WTC11 (cell line): ENCODE measurements at regions of chr1 and their contacts with region 1.

Region 1: DNA sequence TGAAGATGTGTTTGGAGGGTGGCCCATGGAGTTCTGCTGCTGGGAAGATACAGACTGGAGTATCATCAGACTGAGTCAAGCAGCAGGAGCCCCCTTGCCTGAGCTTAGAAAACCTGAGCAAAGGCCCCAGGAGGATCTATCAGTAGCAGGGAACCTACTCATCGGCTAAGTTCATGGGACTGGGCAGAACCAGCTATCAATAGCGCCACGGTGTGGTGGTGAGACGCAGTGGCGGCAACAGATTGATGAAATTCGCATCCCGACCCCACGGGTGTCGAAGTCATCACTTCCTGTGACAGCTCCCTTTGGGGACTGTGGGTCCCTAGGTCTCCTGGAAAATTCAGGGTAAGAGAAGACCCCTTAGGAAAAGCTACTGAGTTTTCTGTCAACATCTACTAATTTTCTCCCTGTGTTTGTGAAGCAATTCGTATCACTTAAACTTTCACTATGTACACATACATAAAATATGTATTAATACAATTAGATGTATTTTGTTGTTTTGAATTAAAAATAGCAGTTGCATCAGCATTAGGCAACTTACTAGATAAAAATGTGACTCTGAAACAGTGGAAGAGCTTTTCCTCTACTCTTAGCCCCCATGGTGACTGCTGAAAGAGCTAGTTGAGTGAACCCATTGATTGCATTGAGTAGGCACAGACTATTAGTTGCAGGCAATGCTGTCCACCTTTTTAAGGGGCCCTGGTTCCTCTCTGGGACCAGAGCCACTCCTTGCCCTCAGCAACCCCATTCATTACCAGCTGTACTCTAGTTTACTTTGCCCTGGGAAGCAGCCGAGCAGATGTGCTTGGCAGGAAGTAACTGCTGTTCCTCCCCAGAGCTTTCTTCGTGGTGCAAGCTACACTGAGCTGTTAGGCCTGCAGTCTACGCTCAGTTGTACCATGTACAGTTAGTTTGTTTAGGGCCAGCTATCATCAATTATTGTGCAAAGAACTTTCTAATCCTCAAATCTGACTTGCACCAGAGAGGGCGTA is 7.3 kb upstream of the CACNA1S start:
- DNase-seq: peak; percentile 77
- ATAC-seq: peak; percentile 74
- H3K4me3 Mint-ChIP-seq: no peak overlapping the region
- H3K27ac Mint-ChIP-seq: no peak overlapping the region
- H3K4me1 Mint-ChIP-seq: peaks cover 10% of the 10 kb centered on the region
- H3K27me3 Mint-ChIP-seq: peaks cover 53% of the 10 kb centered on the region
- CTCF ChIP-seq: peak; percentile 71

Region 2: GRCh38 chr1:200992382-200993048 is 127.0 kb before region 1 on chr1:
- CTCF ChIA-PET with region 1: interaction called, 14 read pairs
- POLR2A ChIA-PET with region 1: no interaction called
- DNase-seq: no peak
- ATAC-seq: no peak
- H3K4me3 Mint-ChIP-seq: no peak overlapping the region
- H3K27ac Mint-ChIP-seq: no peak overlapping the region
- H3K4me1 Mint-ChIP-seq: no peaks in the 10 kb centered on the region
- H3K27me3 Mint-ChIP-seq: no peaks in the 10 kb centered on the region; the same call in 1 of the 2 replicates
- CTCF ChIP-seq: no peak

Region 3: DNA sequence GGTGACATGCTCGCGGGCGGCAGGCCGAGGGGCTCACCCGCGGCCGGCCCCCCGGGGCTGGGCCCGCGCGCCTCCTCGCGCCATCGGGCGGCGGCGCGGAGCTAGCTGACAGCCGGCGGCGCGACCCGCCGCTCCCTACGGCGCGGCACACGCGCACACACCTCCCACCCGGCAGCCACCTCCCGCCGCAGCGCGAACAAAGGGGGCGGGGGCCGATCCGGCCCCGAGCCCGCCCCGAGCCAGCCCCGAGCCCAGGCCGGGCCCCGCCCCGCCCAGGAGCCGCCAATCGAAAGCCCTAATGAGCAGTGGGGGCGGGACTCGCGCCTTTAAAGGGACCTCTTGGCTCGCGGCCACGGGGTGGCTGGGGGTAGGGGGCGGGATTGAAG is 96.0 kb before region 1 on chr1 and contains the start of gene KIF21B:
- CTCF ChIA-PET with region 1: interaction called, 61 read pairs
- POLR2A ChIA-PET with region 1: no interaction called
- DNase-seq: peak; percentile 90
- ATAC-seq: peak; percentile 82
- H3K4me3 Mint-ChIP-seq: peak within 1 kb of the TSS; percentile 79
- H3K27ac Mint-ChIP-seq: no peak within 1 kb of the TSS
- H3K4me1 Mint-ChIP-seq: peaks cover 65% of the 10 kb centered on the region
- H3K27me3 Mint-ChIP-seq: peaks cover 7% of the 10 kb centered on the region
- CTCF ChIP-seq: no peak
- total RNA-seq, gene KIF21B: 17.8 to 19.4 TPM (median 18.0 TPM) in 3 replicates

Region 4: GRCh38 chr1:201069636-201070035 is 49.9 kb before region 1 on chr1:
- CTCF ChIA-PET with region 1: interaction called, 15 read pairs
- POLR2A ChIA-PET with region 1: no interaction called
- DNase-seq: no peak
- ATAC-seq: peak; percentile 64
- H3K4me3 Mint-ChIP-seq: no peak overlapping the region
- H3K27ac Mint-ChIP-seq: no peak overlapping the region
- H3K4me1 Mint-ChIP-seq: peaks cover 10% of the 10 kb centered on the region
- H3K27me3 Mint-ChIP-seq: no peaks in the 10 kb centered on the region
- CTCF ChIP-seq: no peak

Region 5: GRCh38 chr1:201096035-201096434 is 23.5 kb before region 1 on chr1:
- CTCF ChIA-PET with region 1: interaction called, 19 read pairs
- POLR2A ChIA-PET with region 1: no interaction called
- DNase-seq: no peak
- ATAC-seq: no peak
- H3K4me3 Mint-ChIP-seq: no peak overlapping the region
- H3K27ac Mint-ChIP-seq: no peak overlapping the region
- H3K4me1 Mint-ChIP-seq: no peaks in the 10 kb centered on the region
- H3K27me3 Mint-ChIP-seq: no peaks in the 10 kb centered on the region
- CTCF ChIP-seq: no peak

Region 6: DNA sequence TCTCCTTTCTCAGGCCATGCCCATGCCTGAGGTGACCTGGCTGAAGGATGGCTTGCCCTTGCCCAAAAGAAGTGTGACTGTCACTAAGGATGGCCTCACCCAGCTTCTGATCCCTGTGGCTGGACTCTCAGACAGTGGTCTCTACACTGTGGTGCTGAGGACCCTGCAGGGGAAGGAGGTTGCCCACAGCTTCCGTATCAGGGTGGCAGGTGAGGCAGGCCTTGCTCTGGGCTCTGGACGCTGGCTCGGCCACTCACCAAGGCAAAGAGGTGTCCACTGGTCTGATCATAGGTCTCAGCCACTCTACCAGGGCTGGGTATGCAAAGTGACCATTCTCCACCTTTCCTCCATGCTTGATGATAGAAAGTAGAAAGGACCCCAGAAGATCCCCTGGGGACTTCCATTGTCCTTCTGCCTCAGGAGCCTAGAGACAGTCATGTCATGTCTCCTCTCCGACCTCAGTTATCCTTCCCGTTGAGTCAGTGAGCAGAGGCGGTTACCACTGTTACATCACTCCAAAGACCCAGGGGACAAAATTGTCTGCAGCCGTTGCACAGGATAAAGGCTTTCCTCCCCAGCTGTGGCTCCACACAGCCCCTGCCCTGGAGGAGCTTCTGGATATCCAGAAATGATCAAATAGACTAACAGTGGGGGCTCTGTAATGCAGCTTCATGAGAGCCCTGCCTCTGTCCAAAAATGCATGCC is 105.3 kb after region 1 on chr1:
- CTCF ChIA-PET with region 1: interaction called, 12 read pairs
- POLR2A ChIA-PET with region 1: no interaction called
- DNase-seq: no peak
- ATAC-seq: no peak
- H3K4me3 Mint-ChIP-seq: no peak overlapping the region
- H3K27ac Mint-ChIP-seq: no peak overlapping the region
- H3K4me1 Mint-ChIP-seq: no peaks in the 10 kb centered on the region
- H3K27me3 Mint-ChIP-seq: peaks cover 5% of the 10 kb centered on the region
- CTCF ChIP-seq: no peak

Region 7: DNA sequence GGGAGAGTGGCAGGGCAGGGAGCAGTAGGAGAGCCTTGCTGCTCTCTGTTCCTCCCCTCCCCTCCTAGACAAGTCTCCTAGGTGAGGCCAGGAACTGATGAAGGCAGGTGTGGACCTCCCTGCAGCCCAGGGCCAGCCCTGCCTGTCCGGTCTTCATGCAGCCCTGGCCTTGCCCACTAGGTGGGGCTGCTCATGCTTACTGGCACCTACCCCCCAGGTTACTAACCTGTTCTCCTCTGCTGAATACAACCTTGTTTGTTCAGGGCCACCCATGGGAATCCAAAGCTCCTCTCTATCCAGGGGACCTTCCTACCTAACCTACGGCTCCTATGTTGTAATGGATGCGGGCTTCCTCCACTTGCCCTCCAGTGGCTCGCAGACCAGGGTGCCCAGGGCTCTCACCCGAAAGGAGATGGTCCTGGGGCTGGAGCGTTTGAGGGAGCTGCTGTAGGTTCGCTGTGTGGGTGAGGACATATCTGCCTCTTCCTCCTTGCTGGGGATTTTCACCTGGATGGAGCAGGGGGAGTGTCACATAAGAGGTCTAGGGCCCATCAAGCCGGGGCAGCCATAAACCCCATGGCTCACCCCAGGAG is 265.9 kb after region 1 on chr1:
- CTCF ChIA-PET with region 1: no interaction called
- POLR2A ChIA-PET with region 1: no interaction called
- DNase-seq: peak; percentile 90
- ATAC-seq: peak; percentile 95
- H3K4me3 Mint-ChIP-seq: no peak overlapping the region
- H3K27ac Mint-ChIP-seq: no peak overlapping the region
- H3K4me1 Mint-ChIP-seq: no peaks in the 10 kb centered on the region; the same call in 1 of the 2 replicates
- H3K27me3 Mint-ChIP-seq: no peaks in the 10 kb centered on the region
- CTCF ChIP-seq: peak; percentile 81

Region 8: DNA sequence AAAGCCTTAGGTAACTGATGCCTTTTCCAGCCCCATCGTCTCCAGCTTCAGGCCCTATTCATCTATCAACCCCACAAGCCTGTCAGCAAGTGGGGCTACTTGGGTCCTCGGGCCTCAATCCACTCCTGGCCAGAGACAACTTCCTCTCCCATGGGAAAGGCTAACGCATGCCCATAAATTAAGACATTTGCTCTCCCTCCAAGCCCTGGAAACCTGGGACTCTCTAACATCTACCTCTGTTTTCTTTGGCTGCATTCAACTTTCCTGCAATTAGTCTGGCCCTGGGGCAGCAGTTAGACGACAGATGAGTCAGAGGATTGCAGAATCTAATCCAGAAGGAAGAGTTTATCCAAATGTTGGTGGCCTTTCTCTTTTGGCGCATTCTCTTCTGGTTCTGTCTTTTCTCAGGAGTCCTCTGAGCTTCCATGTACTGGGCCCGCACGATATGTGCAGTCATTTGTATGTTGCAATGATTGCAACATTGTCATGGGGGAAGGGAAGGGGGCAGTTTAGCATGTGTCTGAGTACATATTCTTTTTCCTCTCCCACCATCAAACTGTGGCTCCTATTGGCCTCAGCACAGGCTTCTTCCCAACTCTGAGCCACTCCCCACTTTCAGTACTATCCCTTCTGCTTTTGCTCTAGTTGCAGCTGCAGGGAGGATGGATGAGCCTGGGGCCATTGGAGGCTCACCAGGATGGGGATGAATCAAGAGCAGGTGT is 473.9 kb after region 1 on chr1:
- CTCF ChIA-PET with region 1: no interaction called
- POLR2A ChIA-PET with region 1: no interaction called
- DNase-seq: no peak
- ATAC-seq: no peak
- H3K4me3 Mint-ChIP-seq: no peak overlapping the region
- H3K27ac Mint-ChIP-seq: no peak overlapping the region
- H3K4me1 Mint-ChIP-seq: peaks cover 46% of the 10 kb centered on the region
- H3K27me3 Mint-ChIP-seq: peaks cover 2% of the 10 kb centered on the region; the same call in 1 of the 2 replicates
- CTCF ChIP-seq: no peak